Activated B cell treated with CpG ODN at 0.5 μM for 24 hours (primary cell): ENCODE measurements at regions of chr3 and their contacts with region 1.

Region 1: GRCh38 chr3:19348929-19349564 is 200.7 kb downstream of the KCNH8 start:
- DNase-seq: no peak
- ATAC-seq: peak; percentile 77
- H3K4me3 Mint-ChIP-seq: peak overlapping the region; percentile 62
- H3K27ac Mint-ChIP-seq: peak overlapping the region; percentile 89
- H3K4me1 Mint-ChIP-seq: peaks cover 52% of the 10 kb centered on the region
- H3K27me3 Mint-ChIP-seq: no peaks in the 10 kb centered on the region
- CTCF ChIP-seq: no peak

Region 2: GRCh38 chr3:18847583-18848197 is 501.4 kb before region 1 on chr3:
- CTCF ChIA-PET with region 1: no interaction called
- POLR2A ChIA-PET with region 1: no interaction called
- intact Hi-C with region 1: loop called (anchors 5 kb)
- DNase-seq: no peak
- ATAC-seq: no peak
- H3K4me3 Mint-ChIP-seq: no peak overlapping the region
- H3K27ac Mint-ChIP-seq: no peak overlapping the region
- H3K4me1 Mint-ChIP-seq: peaks cover 11% of the 10 kb centered on the region
- H3K27me3 Mint-ChIP-seq: no peaks in the 10 kb centered on the region
- CTCF ChIP-seq: no peak

Region 3: DNA sequence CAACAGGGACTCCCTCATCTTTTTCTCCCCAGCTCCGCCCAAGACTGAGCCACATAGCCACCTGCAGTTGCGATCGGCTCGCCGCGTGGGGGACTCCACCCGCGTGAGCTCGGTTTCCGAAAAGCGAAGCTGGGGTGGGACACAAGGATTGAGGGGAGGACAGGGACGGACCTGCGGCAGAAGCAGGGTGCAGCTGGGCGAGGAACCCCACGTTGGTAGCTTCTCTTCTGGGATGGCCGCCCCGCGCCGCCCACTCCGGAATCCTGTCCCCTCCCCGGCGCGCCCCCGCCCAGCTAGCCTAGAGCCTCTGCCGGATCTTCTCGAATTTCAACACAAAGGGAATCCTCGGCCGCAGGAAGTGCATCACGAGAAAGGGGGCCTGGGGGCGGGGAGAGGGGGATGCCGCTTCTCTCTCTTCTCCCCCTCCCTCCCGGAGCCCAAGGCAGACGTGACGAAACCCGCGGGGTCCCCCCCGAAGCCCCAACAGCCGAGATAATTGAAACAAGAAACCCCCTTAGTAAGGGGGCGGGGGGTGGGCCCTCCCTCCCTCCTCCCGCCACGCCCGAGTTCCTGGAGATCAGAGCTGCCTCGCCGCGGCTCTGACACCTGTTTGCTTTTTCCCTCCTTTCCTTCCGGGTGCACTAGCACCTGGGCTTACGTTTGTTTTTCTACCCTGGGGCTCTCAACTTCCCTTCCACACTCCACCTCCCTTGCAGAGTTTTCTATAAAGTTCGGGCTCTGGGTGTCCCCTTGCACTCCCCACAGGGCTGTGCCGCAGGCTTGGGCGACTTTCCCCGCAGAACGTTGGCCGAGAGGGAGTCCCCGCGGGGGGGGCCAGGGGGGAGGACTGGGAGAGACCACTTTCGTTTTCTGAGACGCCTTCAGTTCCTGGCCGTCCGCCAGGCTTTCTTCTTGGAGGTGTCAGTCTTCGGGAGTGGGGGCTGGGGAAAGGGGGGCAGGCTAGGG is 202.1 kb before region 1 on chr3:
- CTCF ChIA-PET with region 1: interaction called, 6 read pairs
- POLR2A ChIA-PET with region 1: interaction called, 4 read pairs
- intact Hi-C with region 1: loop called (anchors 2 kb)
- DNase-seq: peak; percentile 64
- ATAC-seq: peak; percentile 73
- H3K4me3 Mint-ChIP-seq: peak overlapping the region; percentile 95
- H3K27ac Mint-ChIP-seq: peak overlapping the region; percentile 85
- H3K4me1 Mint-ChIP-seq: peaks cover 14% of the 10 kb centered on the region
- H3K27me3 Mint-ChIP-seq: peaks cover 9% of the 10 kb centered on the region
- CTCF ChIP-seq: no peak

Region 4: DNA sequence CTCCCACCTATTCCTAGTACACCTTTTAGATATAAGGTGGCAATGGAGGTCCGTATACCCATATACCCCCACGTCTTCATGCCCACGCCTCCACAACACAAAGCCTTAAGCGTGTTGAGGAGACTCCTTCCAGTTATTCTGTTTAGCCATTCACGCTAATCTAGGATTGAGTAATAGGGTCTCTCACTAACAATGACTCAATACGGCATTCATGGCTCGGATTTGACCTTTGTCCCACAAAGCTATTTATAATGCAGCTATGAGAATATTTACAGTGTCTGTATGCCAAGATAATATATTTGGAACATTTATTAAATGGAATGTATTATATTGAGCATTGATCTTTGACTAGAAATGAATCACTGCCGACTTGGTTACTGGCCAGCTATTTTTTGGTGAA is 15.1 kb after region 1 on chr3:
- CTCF ChIA-PET with region 1: interaction called, 13 read pairs
- POLR2A ChIA-PET with region 1: interaction called, 6 read pairs
- intact Hi-C with region 1: no loop called
- DNase-seq: no peak
- ATAC-seq: no peak
- H3K4me3 Mint-ChIP-seq: no peak overlapping the region
- H3K27ac Mint-ChIP-seq: peak overlapping the region; percentile 25
- H3K4me1 Mint-ChIP-seq: peaks cover 39% of the 10 kb centered on the region
- H3K27me3 Mint-ChIP-seq: no peaks in the 10 kb centered on the region
- CTCF ChIP-seq: no peak

Region 5: GRCh38 chr3:19662486-19662885 is 313.4 kb after region 1 on chr3:
- CTCF ChIA-PET with region 1: no interaction called
- POLR2A ChIA-PET with region 1: no interaction called
- intact Hi-C with region 1: no loop called
- DNase-seq: no peak
- ATAC-seq: no peak
- H3K4me3 Mint-ChIP-seq: no peak overlapping the region
- H3K27ac Mint-ChIP-seq: no peak overlapping the region
- H3K4me1 Mint-ChIP-seq: no peaks in the 10 kb centered on the region
- H3K27me3 Mint-ChIP-seq: peaks cover 2% of the 10 kb centered on the region
- CTCF ChIP-seq: no peak

Region 6: DNA sequence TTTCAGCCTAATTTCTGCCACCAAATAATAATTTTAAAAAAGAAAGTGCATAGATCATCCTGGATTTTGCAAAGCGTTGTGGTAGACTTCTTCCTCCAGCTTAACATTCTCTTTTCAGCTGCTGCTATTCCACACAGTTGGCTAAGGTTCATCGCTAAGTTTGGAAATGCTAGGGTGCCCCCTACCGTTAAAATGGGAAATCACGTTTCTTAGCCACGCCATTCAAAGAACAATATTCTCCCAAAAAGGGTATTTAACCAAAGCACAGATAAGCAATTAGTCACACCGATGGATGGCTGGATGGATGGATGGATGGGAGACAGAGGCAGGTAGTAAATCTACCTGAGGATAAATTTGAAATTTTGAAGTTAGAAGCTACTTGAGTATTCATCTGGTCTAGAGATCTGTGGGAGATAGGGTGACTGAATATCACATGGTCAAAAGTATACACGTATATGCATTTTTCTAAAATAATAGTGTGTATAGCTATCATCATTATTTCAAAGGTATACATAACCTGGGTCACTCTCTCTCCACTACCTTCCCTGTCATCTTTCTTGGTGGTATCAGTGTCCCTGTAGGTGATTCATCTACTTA is 517.8 kb after region 1 on chr3:
- CTCF ChIA-PET with region 1: interaction called, 87 read pairs
- POLR2A ChIA-PET with region 1: no interaction called
- intact Hi-C with region 1: loop called (anchors 1 kb)
- DNase-seq: no peak
- ATAC-seq: peak; percentile 71
- H3K4me3 Mint-ChIP-seq: no peak overlapping the region
- H3K27ac Mint-ChIP-seq: no peak overlapping the region
- H3K4me1 Mint-ChIP-seq: peaks cover 3% of the 10 kb centered on the region
- H3K27me3 Mint-ChIP-seq: peaks cover 3% of the 10 kb centered on the region
- CTCF ChIP-seq: no peak

Region 7: GRCh38 chr3:20125897-20126296 is 776.9 kb after region 1 on chr3:
- CTCF ChIA-PET with region 1: no interaction called
- POLR2A ChIA-PET with region 1: no interaction called
- intact Hi-C with region 1: loop called (anchors 5 kb)
- DNase-seq: peak; percentile 39
- ATAC-seq: peak; percentile 95
- H3K4me3 Mint-ChIP-seq: peak overlapping the region; percentile 58
- H3K27ac Mint-ChIP-seq: peak overlapping the region; percentile 87
- H3K4me1 Mint-ChIP-seq: peaks cover 38% of the 10 kb centered on the region
- H3K27me3 Mint-ChIP-seq: no peaks in the 10 kb centered on the region
- CTCF ChIP-seq: no peak